MCF 10A (cell line): ENCODE measurements at regions of chr6 and their contacts with region 1.

Region 1: DNA sequence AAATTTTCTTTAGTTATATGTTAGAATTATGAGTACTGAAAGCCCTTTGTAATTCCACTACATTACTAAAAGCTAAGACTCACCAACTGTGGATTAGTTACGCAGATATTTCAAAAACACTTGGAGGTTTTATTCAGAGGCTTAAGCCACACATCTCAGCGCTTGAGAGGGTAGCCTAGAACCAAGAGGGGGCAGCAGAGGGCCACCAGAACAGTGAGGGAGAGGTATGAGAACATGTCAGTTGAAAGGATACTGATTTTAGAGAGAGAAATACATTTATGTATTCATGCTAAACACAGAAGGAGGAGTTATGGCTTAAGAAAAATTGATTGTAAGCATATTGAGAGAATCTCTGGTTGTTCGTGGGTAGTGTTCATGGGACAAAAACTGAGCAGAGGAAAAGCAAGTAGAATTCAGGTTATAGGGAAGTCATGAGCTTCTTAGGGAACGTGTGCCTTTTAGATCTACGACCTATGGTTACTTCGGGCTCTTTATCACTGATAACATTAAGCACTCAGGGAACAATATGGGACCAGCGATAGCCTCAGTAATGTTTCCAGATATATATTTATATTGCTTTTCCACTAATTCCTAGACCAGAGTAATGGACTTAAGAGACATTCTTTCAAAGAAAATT is 20.4 kb upstream of the SERINC1 start:
- DNase-seq: peak; percentile 80
- H3K4me3 Mint-ChIP-seq: no peak overlapping the region
- H3K27ac Mint-ChIP-seq: peak overlapping the region; percentile 2
- H3K4me1 Mint-ChIP-seq: peaks cover 6% of the 10 kb centered on the region
- H3K27me3 Mint-ChIP-seq: no peaks in the 10 kb centered on the region
- CTCF ChIP-seq: peak; percentile 77

Region 2: DNA sequence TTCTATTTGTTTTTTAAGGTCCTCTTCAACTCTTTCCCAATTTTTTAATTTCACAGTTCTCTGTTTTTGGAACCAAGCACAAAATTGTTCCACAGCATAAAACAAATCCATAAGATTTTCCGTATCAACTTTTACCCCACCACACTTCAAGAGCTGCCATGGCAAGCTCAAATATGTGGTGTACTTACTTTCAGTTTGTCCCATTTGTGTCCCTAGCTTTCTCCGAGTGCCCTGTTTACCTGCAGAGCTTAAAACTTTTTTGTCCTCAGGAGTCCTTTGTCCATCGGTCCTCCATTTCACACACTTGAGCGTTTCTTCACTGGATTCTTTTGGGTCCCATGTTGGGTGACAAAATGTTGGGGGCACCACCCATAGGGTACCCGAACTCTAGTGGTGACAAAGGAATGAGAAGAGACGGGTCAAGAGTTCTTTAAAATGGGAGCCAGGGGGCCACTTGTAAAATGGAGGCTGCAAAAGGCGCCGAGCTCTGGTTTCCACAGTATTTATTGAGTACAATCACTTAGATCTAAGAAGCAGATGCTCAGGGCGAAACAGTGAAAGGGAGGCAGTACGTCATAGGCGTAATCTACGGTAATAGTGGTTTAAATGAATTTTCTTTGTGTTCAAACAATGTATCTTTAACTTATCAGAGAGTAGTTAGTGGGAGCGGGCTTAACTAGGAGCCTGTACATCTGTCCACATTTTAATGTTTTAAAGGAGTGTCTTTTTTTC is 19.3 kb after region 1 on chr6:
- CTCF ChIA-PET with region 1: interaction called, 13 read pairs
- POLR2A ChIA-PET with region 1: interaction called, 3 read pairs
- intact Hi-C with region 1: no loop called
- DNase-seq: no peak
- H3K4me3 Mint-ChIP-seq: no peak overlapping the region
- H3K27ac Mint-ChIP-seq: no peak overlapping the region
- H3K4me1 Mint-ChIP-seq: no peaks in the 10 kb centered on the region
- H3K27me3 Mint-ChIP-seq: no peaks in the 10 kb centered on the region
- CTCF ChIP-seq: no peak

Region 3: DNA sequence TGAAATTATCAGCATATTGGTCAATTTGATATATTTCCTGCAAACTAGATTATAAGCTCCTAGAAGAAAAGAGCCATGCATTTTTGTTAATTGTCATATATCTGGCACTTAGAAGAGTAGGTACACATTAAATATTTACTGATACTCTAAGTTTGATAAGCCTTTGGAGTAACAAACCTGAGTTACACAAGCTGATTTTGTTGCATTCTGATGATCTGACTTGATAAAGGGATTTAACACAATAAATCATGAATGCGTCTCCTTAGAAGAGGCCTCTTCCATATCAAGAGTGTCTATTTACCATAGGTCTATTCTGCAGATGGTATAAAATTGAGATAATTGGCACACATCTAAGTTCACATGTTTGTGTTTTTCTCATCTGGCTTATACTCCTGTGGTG is 28.1 kb after region 1 on chr6:
- CTCF ChIA-PET with region 1: interaction called, 25 read pairs
- POLR2A ChIA-PET with region 1: interaction called, 3 read pairs
- intact Hi-C with region 1: no loop called
- DNase-seq: no peak
- H3K4me3 Mint-ChIP-seq: no peak overlapping the region
- H3K27ac Mint-ChIP-seq: no peak overlapping the region
- H3K4me1 Mint-ChIP-seq: no peaks in the 10 kb centered on the region
- H3K27me3 Mint-ChIP-seq: no peaks in the 10 kb centered on the region
- CTCF ChIP-seq: no peak

Region 4: DNA sequence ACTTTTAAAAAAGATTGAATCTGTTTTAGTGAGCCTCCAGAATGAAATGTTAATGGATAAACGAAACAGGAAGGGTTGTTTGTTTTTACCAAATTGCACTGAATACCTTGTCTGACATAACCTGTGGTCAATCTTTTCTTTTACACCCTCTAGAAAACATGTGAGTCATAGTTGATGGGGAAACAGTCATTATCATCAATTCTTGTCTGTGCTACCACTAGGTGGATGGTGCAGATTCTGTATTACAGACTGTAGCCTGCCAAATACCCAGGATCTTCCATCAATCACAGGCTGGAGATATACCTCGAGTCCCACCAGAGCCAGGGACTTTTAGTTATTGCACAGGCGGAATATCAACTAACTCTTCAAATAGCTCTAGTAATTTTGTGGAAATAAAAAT is 88.7 kb after region 1 on chr6:
- CTCF ChIA-PET with region 1: no interaction called
- POLR2A ChIA-PET with region 1: no interaction called
- intact Hi-C with region 1: no loop called
- DNase-seq: peak; percentile 60
- H3K4me3 Mint-ChIP-seq: no peak overlapping the region
- H3K27ac Mint-ChIP-seq: no peak overlapping the region
- H3K4me1 Mint-ChIP-seq: no peaks in the 10 kb centered on the region
- H3K27me3 Mint-ChIP-seq: no peaks in the 10 kb centered on the region
- CTCF ChIP-seq: peak; percentile 19

Region 5: GRCh38 chr6:122751326-122751725 is 259.3 kb after region 1 on chr6:
- CTCF ChIA-PET with region 1: interaction called, 10 read pairs
- POLR2A ChIA-PET with region 1: no interaction called
- intact Hi-C with region 1: no loop called
- DNase-seq: no peak
- H3K4me3 Mint-ChIP-seq: no peak overlapping the region
- H3K27ac Mint-ChIP-seq: no peak overlapping the region
- H3K4me1 Mint-ChIP-seq: no peaks in the 10 kb centered on the region
- H3K27me3 Mint-ChIP-seq: no peaks in the 10 kb centered on the region
- CTCF ChIP-seq: no peak